Left ventricle myocardium inferior (tissue), 1 donor: ENCODE measurements at regions of chr7 and their contacts with region 1.

Region 1: GRCh38 chr7:140003913-140004382 is 58.8 kb downstream of the PARP12 start:
- DNase-seq: no peak
- H3K4me3 ChIP-seq: no peak overlapping the region
- H3K27ac ChIP-seq: no peak overlapping the region
- H3K4me1 ChIP-seq: no peaks in the 10 kb centered on the region
- H3K27me3 ChIP-seq: no peaks in the 10 kb centered on the region
- CTCF ChIP-seq: peak; percentile 52

Region 2: DNA sequence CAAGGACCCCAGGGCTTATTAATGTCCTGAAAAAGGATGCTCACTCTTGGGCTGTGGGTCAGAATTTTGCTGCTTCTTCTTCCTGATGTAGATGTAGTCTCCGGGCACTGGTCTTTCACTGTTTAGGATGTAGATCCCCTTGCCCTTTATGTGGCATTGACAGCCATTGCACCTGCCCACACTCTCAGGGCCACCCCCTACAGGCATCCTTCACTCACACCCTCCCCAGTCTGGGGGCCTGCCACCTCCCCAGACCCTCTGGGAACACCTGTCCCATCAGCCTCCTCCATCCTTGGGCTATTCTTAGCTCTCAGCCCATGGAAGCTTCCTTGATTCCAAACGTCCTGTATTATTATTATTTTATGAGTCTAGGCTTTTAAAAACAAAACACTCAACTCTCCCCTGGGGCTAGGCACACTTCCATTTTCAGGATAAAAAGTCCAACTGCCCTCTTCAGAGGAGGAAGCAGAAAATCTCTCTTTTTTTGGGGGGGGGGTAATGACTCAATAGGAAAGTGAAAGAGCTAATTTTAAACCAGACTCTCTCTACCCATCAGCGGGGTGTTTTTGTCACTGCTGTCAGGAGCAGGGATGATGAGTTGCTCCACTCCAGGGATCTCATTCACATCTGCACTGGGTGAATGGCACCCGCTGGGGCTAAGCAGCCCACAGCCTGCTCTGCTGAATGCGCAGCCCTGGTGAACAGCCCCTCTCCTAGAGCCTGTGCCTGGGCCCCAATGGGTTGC is 508.9 kb before region 1 on chr7:
- intact Hi-C with region 1: loop called (anchors 10 kb)
- DNase-seq: no peak
- H3K4me3 ChIP-seq: no peak overlapping the region
- H3K27ac ChIP-seq: no peak overlapping the region
- H3K4me1 ChIP-seq: peaks cover 7% of the 10 kb centered on the region
- H3K27me3 ChIP-seq: peaks cover 19% of the 10 kb centered on the region
- CTCF ChIP-seq: no peak

Region 3: GRCh38 chr7:139618482-139619366 is 385.2 kb before region 1 on chr7:
- intact Hi-C with region 1: loop called (anchors 10 kb)
- DNase-seq: no peak
- H3K4me3 ChIP-seq: no peak overlapping the region
- H3K27ac ChIP-seq: no peak overlapping the region
- H3K4me1 ChIP-seq: peaks cover 10% of the 10 kb centered on the region
- H3K27me3 ChIP-seq: no peaks in the 10 kb centered on the region
- CTCF ChIP-seq: peak; percentile 67

Region 4: DNA sequence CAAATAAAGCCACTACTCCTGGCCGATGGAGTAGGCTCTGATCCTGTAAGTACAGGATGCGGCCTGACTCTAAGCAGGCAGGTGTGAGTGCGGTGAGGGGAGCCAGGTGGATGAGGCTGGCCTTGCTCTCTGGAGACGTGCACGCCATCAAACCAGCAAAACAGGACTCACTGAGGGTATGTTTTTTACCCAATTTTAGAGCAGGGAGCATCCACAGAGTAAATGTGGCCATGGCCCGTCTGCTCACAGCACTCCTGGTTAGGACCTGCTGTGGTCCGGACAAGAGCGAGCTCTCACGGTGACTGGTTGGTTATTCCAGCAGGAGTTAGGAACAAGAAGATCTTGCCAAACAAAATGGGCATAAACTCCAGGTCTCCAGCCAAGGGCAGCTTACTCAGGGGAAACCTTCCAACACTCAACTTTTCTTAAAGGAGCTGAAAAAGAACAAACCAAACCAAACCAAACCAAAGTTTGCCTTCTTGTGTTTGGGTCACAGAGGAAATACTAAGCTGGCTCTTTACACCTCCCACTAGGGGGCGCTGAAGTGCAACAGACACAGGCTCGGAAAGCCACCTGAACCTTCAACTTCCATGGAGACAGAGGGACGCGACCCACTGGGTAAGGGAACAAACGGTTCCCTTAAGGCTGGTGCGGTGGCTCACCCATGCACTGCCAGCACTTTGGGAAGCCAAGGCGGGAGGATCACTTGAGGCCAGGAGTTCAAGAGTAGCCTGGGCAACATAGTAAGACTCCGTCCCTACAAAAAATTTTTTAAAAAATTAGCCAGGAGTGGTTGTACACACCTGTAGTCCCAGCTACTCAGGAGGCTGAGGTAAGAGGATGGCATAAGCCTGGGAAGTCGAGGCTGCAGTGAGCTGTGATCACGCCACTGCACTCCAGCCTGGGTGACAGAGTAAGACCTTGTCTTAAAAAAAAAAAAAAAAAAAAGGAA is 358.1 kb before region 1 on chr7:
- intact Hi-C with region 1: loop called (anchors 10 kb)
- DNase-seq: peak; percentile 78
- H3K4me3 ChIP-seq: no peak overlapping the region
- H3K27ac ChIP-seq: peak overlapping the region; percentile 83
- H3K4me1 ChIP-seq: peaks cover 61% of the 10 kb centered on the region
- H3K27me3 ChIP-seq: no peaks in the 10 kb centered on the region
- CTCF ChIP-seq: peak; percentile 94

Region 5: DNA sequence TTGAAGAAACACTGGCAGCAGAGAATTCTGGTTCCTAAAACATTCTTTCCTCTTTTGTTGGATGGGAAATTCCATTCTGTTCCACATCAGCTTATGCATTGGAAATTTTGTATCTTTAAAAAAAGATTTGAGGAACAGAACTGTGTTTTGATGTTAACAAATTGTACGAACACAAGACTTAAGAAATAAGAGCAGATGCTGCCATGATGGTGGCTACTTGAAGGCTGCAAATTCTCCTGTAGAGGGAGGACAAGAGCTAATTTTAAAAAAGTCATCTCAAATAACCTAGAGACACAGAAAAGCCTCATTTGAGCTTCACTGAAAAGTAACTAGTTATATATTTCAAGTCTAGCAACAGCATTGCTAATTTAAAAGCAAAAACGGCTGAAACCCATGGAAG is 722.3 kb after region 1 on chr7:
- intact Hi-C with region 1: no loop called
- DNase-seq: no peak
- H3K4me3 ChIP-seq: no peak overlapping the region
- H3K27ac ChIP-seq: no peak overlapping the region
- H3K4me1 ChIP-seq: no peaks in the 10 kb centered on the region
- H3K27me3 ChIP-seq: no peaks in the 10 kb centered on the region
- CTCF ChIP-seq: peak; percentile 22